B cell (primary cell): ENCODE measurements at regions of chr22 and their contacts with region 1.

Region 1: DNA sequence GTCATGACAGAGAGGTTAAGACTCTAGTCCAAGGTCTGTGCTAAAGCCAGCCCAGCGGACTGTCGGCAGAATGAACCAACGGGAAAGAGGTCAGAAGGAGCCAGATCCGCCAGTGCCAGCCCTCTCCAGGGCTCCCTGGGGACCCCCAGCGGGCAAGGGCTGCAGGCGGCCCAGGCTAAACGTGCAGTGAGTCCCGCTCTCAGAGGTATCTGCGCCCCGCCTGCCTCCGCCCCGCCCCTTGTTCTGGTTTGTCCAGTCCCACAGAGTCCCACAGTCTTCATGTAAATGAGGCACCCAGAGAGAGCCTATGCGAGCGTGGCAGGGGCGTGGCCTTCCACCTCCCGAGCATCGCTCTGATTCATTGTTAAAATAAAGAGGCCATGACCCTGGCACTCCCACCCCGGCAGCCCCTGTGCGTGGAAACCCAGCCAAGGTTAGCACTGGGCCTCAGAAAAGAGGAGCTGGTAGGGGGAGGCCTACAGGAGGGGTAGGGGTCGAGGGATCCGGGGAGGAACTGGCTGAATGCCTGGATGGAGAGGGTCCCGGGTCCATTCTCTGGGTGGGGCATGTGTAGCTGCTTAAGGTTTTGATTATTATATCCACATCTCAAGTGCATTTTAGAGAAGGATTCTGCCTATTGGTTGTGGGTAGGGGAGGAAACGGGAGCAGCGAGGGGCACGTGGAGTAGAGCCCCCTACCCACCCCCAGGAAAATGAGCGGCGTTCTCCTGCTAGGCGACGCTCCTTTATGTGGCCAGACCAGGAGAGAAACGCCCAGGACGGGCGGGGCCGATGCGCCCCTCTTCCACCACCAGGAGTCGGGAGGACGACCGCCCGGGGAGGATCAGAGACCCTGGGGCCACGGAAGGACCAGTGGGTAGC is at the start of gene TRIOBP:
- DNase-seq: peak; percentile 85
- ATAC-seq: peak; percentile 99
- H3K4me3 ChIP-seq: peak within 1 kb of the TSS in 4 of 5 experiments; percentile 6 to 34 (median 24)
- H3K4me3 Mint-ChIP-seq: peak within 1 kb of the TSS; percentile 72
- H3K27ac ChIP-seq: no peak within 1 kb of the TSS
- H3K27ac Mint-ChIP-seq: peak within 1 kb of the TSS; percentile 37
- H3K4me1 ChIP-seq: peaks cover 9 to 17% of the 10 kb centered on the region in 2 donors
- H3K4me1 Mint-ChIP-seq: peaks cover 11% of the 10 kb centered on the region
- H3K27me3 ChIP-seq: no peaks in the 10 kb centered on the region
- H3K27me3 Mint-ChIP-seq: no peaks in the 10 kb centered on the region
- CTCF ChIP-seq: peak; percentile 35
- total RNA-seq, gene TRIOBP: 47.2 and 47.5 TPM in 2 replicates

Region 2: DNA sequence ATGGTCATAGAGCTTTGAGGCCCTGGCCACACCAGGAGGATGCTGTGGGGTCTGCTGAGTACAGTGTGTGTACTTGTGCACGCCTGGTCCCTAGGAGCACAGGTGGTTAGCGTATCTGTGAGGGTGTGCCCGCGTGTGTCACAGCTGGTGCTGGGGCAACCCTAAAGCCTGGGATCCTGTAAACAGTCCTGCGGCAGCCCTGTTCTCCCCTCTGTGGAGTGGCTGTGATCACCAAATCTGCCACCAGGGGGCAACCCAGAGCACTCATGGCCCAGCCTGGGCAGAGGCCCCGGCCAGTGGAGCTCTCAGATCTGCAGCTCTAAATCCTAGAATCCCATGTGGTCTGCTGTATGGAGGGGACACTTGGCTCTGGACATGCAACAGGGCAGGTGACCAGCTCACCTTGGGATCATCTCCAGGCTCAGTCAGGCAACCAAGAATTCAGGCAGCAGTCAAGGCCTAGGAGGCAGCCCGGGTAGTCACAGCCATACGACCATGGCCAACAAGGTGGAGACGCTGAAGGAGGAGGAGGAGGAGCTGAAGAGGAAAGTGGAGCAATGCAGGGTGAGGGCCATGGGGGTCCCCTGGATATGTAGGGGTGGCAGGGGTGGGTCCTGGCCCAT is 53.6 kb before region 1 on chr22:
- CTCF ChIA-PET with region 1: interaction called, 12 read pairs
- POLR2A ChIA-PET with region 1: no interaction called
- intact Hi-C with region 1: no loop called
- DNase-seq: peak; percentile 86
- ATAC-seq: peak; percentile 75
- H3K4me3 ChIP-seq: no peak overlapping the region
- H3K4me3 Mint-ChIP-seq: peak overlapping the region; percentile 56
- H3K27ac ChIP-seq: no peak overlapping the region
- H3K27ac Mint-ChIP-seq: peak overlapping the region; percentile 87
- H3K4me1 ChIP-seq: peaks cover 24 to 39% of the 10 kb centered on the region in 2 donors
- H3K4me1 Mint-ChIP-seq: peaks cover 35% of the 10 kb centered on the region
- H3K27me3 ChIP-seq: no peaks in the 10 kb centered on the region
- H3K27me3 Mint-ChIP-seq: no peaks in the 10 kb centered on the region
- CTCF ChIP-seq: peak; percentile 91

Region 3: GRCh38 chr22:37686002-37686982 is 10.6 kb before region 1 on chr22 and contains the start of gene NOL12:
- CTCF ChIA-PET with region 1: interaction called, 4 read pairs
- POLR2A ChIA-PET with region 1: no interaction called
- intact Hi-C with region 1: loop called (anchors 1 kb)
- DNase-seq: peak; percentile 93
- ATAC-seq: peak; percentile 86
- H3K4me3 ChIP-seq: peak within 1 kb of the TSS; percentile 79 to 98 (median 88)
- H3K4me3 Mint-ChIP-seq: peak within 1 kb of the TSS; percentile 99
- H3K27ac ChIP-seq: peak within 1 kb of the TSS; percentile 70 to 81
- H3K27ac Mint-ChIP-seq: peak within 1 kb of the TSS; percentile 95
- H3K4me1 ChIP-seq: peaks cover 10 to 30% of the 10 kb centered on the region in 2 donors
- H3K4me1 Mint-ChIP-seq: peaks cover 28% of the 10 kb centered on the region
- H3K27me3 ChIP-seq: no peaks in the 10 kb centered on the region
- H3K27me3 Mint-ChIP-seq: no peaks in the 10 kb centered on the region
- CTCF ChIP-seq: no peak
- total RNA-seq, gene NOL12: 34.7 and 38.5 TPM in 2 replicates

Region 4: DNA sequence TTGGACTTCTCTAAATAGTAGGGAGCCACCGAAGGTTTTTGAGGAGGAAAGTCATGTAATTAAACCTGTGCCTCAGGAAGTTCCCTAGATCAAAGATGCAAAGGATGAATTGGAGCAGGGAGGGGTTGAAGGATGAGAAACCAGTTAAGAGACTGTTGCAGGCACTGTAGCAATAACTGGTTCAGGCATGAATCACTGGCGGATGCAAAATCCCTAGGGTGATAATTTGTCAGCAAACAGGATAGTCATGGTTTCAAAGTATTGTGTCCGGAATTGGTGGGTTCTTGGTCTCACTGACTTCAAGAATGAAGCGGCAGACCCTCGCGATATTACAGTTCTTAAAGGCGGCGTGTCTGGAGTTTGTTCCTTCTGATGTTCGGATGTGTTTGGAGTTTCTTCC is 19.8 kb after region 1 on chr22:
- CTCF ChIA-PET with region 1: no interaction called
- POLR2A ChIA-PET with region 1: no interaction called
- intact Hi-C with region 1: no loop called
- DNase-seq: no peak
- ATAC-seq: no peak
- H3K4me3 ChIP-seq: no peak overlapping the region
- H3K4me3 Mint-ChIP-seq: no peak overlapping the region
- H3K27ac ChIP-seq: no peak overlapping the region
- H3K27ac Mint-ChIP-seq: no peak overlapping the region
- H3K4me1 ChIP-seq: no peaks in the 10 kb centered on the region
- H3K4me1 Mint-ChIP-seq: no peaks in the 10 kb centered on the region
- H3K27me3 ChIP-seq: no peaks in the 10 kb centered on the region
- H3K27me3 Mint-ChIP-seq: no peaks in the 10 kb centered on the region
- CTCF ChIP-seq: no peak

Region 5: GRCh38 chr22:37797874-37798500 is 101.1 kb after region 1 on chr22:
- CTCF ChIA-PET with region 1: no interaction called
- POLR2A ChIA-PET with region 1: no interaction called
- intact Hi-C with region 1: no loop called
- DNase-seq: no peak
- ATAC-seq: peak; percentile 31
- H3K4me3 ChIP-seq: no peak overlapping the region
- H3K4me3 Mint-ChIP-seq: peak overlapping the region; percentile 53
- H3K27ac ChIP-seq: no peak overlapping the region
- H3K27ac Mint-ChIP-seq: no peak overlapping the region
- H3K4me1 ChIP-seq: peaks cover 12% of the 10 kb centered on the region in 2 donors
- H3K4me1 Mint-ChIP-seq: peaks cover 14% of the 10 kb centered on the region
- H3K27me3 ChIP-seq: peaks cover 0 to 20% (median 9%) of the 10 kb centered on the region in 4 experiments
- H3K27me3 Mint-ChIP-seq: peaks cover 17% of the 10 kb centered on the region
- CTCF ChIP-seq: no peak